ENCODE measurements at regions of chr9 and their contacts with region 1.

Region 1: DNA sequence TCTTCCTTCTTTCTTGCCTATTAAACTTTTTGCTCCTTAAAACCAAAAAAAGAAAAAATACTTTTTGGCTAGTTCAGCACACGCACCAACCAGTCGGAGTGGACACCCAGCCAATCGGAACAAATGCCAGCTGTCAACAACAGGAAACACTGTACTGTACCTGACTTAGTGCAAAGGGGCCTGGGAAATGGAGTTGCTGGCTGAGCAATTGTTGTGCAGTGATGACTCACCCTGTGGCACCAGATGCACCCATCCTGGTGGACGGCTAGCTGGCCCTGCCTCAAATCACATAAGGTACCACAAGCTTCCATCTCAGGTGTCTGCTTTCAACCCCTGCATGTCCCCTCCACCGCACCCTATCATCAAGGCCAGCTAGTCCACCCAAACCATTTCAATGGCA is 20.9 kb downstream of the FOXE1 start:
- DNase-seq: no peak
- H3K4me3 ChIP-seq: no peak overlapping the region
- H3K27ac ChIP-seq: no peak overlapping the region
- H3K4me1 ChIP-seq: no peaks in the 10 kb centered on the region
- H3K27me3 ChIP-seq: no peaks in the 10 kb centered on the region
- CTCF ChIP-seq: no peak

Region 2: DNA sequence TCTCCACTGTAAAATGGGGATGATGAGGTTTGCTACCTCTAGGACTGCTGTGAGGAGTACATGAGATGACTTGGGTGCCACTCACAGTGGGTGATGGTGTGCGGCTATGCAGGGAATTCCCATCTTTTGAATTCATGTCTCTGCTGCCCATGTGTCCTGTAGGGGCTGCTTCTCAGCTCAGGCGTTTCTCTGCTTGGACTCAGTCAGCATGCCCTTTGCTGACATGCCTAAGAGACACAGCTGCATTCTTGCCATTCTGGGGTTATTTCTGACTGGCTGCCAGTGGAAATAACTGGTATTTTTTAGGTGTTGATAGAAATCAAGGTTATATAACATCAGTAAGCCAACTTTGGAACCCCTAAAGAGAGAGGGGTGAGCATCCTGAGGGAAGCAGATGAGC is 152.5 kb before region 1 on chr9:
- intact Hi-C with region 1: loop called (anchors 10 kb)
- DNase-seq: no peak
- H3K4me3 ChIP-seq: no peak overlapping the region
- H3K27ac ChIP-seq: no peak overlapping the region
- H3K4me1 ChIP-seq: no peaks in the 10 kb centered on the region
- H3K27me3 ChIP-seq: no peaks in the 10 kb centered on the region
- CTCF ChIP-seq: no peak

Region 3: DNA sequence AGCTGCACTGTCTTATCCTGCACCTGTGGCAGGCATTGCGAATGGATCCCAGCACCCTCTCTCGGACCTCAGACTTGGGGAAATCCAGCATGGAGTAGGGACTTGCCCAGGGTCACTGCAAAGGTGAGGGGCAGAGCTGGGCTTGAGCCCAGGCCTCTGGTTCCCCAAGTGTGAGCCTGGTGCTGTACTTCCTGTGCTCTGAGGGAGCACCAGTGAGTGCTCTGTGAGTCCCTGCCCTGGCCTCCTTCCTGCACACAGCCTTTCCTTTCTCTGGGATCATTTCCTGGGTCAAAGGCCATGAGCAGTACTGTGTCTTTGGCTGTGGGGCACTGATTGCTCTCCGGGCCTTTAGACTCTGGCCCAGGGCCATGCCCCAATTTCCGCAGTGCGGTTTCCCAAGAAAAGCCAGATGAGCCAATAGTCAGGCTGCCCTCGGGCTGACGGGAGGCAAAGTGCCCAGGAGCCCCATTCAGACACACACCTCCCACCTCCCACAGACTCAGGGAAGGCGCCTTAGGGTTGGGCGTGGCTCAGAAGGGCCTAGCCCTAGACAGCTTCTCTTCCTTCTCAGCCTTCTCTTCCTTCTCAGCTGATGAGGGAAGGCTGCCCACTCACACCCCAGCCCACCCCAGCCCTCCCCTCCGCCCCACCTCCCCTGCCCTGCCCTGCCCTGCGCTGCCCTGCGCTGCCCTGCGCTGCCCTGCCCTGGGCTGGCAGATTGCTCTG is 268.5 kb after region 1 on chr9:
- intact Hi-C with region 1: no loop called
- DNase-seq: no peak
- H3K4me3 ChIP-seq: no peak overlapping the region
- H3K27ac ChIP-seq: no peak overlapping the region
- H3K4me1 ChIP-seq: no peaks in the 10 kb centered on the region
- H3K27me3 ChIP-seq: no peaks in the 10 kb centered on the region
- CTCF ChIP-seq: no peak

Region 4: GRCh38 chr9:98215821-98216220 is 341.9 kb after region 1 on chr9:
- intact Hi-C with region 1: no loop called
- DNase-seq: no peak
- H3K4me3 ChIP-seq: no peak overlapping the region
- H3K27ac ChIP-seq: no peak overlapping the region
- H3K4me1 ChIP-seq: no peaks in the 10 kb centered on the region
- H3K27me3 ChIP-seq: no peaks in the 10 kb centered on the region
- CTCF ChIP-seq: peak in 1 of 3 experiments; percentile 22

Measured in ascending aorta (tissue), 2 donors.